ENCODE measurements at regions of chr11 and their contacts with region 1.

Region 1: DNA sequence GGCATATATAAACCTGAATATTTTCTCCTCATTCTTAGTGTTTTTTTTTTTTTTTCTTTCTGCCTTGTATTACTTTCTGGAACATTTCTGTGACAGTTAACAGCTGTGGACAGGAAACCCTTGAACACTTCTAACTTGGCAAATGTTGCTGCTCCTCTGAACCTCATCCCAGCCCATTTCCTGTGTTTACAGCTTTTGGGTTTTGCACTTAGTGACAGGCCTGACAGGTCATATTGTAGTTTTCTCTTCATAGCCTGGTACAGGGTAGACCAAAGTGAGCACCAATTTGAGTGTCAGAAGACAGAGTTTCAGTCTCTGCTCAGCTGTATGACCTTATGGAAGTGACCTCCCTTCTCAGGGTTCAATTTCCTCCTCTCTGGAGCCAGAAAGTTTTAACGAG is 91.6 kb downstream of the STIM1 start:
- DNase-seq: peak; percentile 44 to 45
- H3K4me3 ChIP-seq: no peak overlapping the region
- H3K27ac ChIP-seq: peak overlapping the region; percentile 88 to 90 (median 90)
- H3K4me1 ChIP-seq: peaks cover 82 to 88% of the 10 kb centered on the region in 2 donors
- H3K27me3 ChIP-seq: no peaks in the 10 kb centered on the region
- CTCF ChIP-seq: no peak
- POLR2A ChIP-seq: no peak

Region 2: GRCh38 chr11:3854977-3855807 is 91.9 kb before region 1 on chr11 and contains the start of gene STIM1:
- intact Hi-C with region 1: loop called (anchors 5 kb)
- DNase-seq: peak; percentile 94 to 96
- H3K4me3 ChIP-seq: peak within 1 kb of the TSS; percentile 78 to 96 (median 93)
- H3K27ac ChIP-seq: peak within 1 kb of the TSS; percentile 95 to 98 (median 95)
- H3K4me1 ChIP-seq: peaks cover 41 to 47% of the 10 kb centered on the region in 2 donors
- H3K27me3 ChIP-seq: no peaks in the 10 kb centered on the region
- CTCF ChIP-seq: peak; percentile 87 to 99 (median 94)
- POLR2A ChIP-seq: peak; percentile 75 to 85
- total RNA-seq, gene STIM1: 54.3 to 89.2 (median 71.0) TPM

Measured in thyroid gland (tissue), 4 donors.